ENCODE measurements at regions of chr14 and their contacts with region 1.

Region 1: GRCh38 chr14:78967110-78967809 is 797.1 kb downstream of the NRXN3 start:
- DNase-seq: peak; percentile 24
- H3K4me3 ChIP-seq: no peak overlapping the region
- CTCF ChIP-seq: no peak

Region 2: GRCh38 chr14:78983126-78983525 is 15.9 kb after region 1 on chr14:
- CTCF ChIA-PET with region 1: interaction called, 11 read pairs
- POLR2A ChIA-PET with region 1: interaction called, 3 read pairs
- DNase-seq: no peak
- H3K4me3 ChIP-seq: no peak overlapping the region
- CTCF ChIP-seq: no peak

Region 3: GRCh38 chr14:79584679-79585078 is 617.4 kb after region 1 on chr14:
- CTCF ChIA-PET with region 1: interaction called, 10 read pairs
- POLR2A ChIA-PET with region 1: no interaction called
- DNase-seq: peak; percentile 86
- H3K4me3 ChIP-seq: no peak overlapping the region
- CTCF ChIP-seq: peak; percentile 51

Region 4: DNA sequence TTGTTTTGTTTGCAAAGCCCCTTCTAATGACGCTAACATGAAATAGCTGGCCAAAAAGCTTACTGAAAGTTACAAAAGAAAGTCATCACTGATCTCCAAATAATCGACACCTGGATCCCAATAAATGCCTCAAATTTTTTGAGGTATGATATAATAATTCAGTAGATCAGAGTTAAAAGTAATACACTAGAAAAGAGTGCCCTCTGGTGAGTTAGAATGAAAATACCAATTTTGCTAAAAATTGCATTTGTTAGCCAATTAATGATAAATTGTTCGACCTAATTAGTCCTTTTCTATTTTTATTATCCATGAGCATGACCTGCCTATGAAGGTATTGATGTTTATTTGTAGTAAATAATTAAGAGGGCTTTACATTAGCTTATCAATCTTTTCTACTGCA is 1895.7 kb after region 1 on chr14:
- CTCF ChIA-PET with region 1: interaction called, 27 read pairs
- POLR2A ChIA-PET with region 1: no interaction called
- DNase-seq: no peak
- H3K4me3 ChIP-seq: no peak overlapping the region
- CTCF ChIP-seq: no peak